Posterior vena cava (tissue), 2 donors: ENCODE measurements at regions of chr17 and their contacts with region 1.

Region 1: GRCh38 chr17:37197336-37197735 is 178.4 kb upstream of the C17orf78 start:
- DNase-seq: no peak

Region 2: DNA sequence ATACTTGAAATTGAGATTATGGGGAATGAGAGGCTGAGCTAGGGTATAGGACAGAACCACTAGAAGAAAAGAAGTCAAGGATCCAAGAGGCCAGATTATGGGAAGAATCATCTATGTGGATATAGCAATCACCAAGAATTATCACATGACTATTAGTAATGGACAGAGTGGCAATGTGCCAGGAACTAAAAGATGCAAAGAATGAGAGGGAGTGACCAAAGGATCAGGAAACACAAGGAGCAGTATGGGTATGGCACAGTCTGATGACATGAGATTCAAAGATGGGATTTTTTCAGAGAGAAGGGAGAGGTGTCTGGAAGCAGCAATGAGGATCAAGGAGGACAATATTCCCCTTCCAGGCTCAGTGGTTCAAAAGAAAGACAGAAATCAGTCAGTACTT is 36.4 kb before region 1 on chr17:
- intact Hi-C with region 1: no loop called
- DNase-seq: no peak

Region 3: DNA sequence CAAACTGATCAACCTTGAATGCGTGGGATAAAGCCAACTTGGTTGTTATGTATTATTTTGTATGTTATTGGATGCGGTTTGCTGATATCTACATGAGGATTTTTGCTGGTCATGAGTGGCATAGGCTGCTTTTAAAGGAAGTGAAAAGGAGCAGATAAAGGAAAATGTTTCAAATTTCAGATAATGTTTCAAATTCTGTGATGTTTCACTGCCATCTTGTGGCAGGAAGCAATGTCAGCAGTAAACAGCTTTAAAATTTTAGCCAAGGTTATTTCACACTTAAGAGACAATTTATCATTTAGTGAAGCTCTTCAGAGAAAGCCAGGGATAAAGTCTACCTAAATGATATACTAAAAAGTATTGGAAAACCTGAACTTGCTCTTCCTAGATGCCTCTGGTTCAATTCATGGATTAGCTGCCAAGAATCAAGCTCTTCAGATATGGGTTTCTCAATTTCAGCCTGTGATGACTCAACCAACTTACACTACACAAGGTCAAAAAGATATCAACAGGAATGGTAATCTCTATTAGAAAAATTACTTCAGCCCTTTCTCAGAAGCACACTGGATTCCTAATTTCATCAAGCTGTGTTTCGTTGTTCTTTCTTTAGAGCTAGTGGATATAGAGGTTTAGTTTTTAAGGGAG is 42.5 kb after region 1 on chr17:
- intact Hi-C with region 1: loop called in 1 of 2 experiments (anchors 2 kb)
- DNase-seq: no peak

Region 4: DNA sequence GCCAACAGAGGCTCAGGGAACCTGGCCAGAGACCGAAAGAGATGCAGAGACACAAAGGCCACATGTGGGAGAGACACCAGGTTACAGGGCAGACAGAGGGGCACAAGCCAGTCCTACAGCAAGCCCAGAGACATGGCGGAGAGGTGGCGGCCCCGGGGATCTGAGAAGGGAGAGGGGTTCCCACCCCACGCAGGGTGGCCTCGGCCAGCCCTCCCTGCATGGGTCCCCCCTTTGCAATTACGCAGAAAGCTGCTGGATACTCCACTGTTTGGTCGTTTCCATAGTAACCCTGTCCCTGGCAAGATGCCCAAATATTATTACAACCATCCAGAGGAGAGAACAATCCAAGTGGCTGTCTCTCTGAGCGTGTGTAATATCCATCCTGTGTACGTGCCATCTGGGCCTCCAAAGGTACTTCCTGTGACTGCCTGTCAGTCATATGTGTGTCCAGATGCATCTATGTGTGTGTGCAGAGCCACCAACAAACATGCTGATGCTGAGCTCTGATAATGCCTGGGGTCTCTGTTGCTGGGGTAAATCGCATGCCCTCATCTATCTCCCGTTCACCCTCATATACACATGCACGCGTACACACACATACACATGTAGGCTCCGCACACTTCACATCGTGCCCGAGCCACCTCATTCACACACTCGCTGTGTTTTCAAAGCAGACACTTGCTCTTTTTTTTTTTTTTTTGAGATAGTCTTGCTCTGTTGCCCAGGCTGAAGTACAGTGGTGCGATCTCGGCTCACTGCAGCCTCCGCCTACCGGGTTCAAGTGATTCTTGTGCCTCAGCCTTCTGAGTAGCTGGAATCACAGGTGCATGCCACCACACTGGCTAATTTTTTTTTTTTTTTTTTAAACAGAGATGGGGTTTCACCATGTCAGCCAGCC is 1545.3 kb after region 1 on chr17:
- intact Hi-C with region 1: no loop called
- DNase-seq: no peak